HAP-1 (cell line): ENCODE measurements at regions of chr5 and their contacts with region 1.

Region 1: DNA sequence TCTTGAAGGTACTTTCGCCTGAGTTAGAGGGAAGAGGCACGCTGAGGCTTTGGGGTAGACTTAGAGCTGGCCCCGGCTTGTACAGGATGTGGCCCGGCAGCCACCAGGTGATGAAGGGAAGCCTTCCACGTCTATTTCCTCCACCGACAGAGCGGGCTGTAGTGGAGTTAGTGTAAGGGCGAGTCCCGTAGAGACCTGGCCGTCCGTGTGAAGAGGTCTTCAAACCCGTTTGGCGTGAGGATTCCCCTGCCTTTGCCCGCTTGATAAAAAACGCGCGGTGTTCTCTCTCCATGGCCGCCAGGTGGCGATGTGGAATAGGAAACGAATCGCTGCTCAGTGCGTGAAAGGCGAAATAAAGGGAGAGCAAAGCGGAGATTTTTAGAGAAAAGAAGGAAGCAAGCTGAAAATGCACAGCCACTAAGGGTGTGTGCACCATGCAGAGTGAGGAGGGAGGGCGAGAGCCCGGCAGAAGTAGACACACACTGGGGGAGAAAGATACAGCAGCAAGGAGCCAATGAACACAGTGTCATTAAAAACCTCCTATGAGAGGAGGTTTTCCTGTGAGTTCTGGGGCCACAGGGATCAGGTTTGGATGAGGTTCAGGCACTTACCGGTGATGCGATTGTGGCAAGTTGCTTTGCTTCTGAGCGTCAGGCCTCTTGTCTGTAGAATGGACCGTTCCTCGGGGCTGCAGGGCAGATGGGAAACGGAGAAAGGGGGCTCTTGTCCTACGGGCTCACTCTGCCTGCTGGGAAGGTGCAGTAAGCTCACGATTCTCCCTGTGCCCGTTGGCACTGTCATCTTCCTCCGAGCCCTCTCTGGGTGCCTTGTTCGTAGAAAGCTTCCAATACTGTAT is 34.2 kb downstream of the STC2 start:
- DNase-seq: peak; percentile 81 to 88
- H3K4me3 ChIP-seq: no peak overlapping the region
- H3K4me1 ChIP-seq: peaks cover 5% of the 10 kb centered on the region
- H3K27me3 ChIP-seq: no peaks in the 10 kb centered on the region

Region 2: DNA sequence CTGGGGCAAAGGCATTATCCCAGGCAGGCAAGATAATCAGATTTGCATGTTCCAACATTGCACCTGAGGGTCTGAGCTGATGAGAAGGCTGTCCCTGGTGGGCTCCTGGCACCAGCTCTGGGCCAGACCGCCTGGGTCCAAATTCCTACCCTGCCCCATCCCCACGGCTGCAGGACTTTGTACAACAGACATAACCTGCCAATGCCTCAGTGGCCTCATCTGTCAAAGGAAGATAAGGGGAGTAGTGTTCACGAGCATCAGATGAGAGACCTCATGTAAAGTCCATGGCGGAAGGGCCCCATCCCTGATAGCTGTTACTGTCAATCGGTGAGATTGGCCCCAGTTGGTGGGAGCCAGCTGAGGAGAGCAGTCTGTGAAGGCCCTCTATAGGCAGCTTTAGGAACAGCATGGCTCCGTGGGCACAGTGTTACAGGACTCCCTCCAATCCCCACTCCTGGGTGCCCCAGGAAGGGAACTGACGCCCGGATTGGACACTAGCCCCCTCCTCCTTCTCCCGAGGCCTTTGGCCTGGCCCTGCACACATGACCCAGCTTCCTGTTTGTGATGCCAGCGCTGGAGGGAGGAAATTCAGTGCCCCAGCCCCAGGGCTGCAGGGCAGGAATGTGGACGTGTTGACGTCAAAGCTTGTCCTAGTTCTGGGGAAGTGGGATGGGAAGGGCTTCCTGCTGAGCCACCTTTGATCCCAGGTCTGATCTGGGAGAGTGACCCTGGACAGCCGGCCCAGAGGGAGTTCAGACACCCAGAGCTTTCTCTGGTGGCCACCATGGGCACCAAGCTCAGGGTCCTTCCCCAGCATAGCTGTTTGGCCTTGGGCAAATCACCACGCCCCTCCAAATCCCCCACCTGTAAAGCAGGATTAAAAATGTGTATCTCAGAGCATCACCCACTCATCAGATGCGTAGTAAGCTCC is 579.3 kb before region 1 on chr5:
- in situ Hi-C with region 1: loop called (anchors 25 kb)
- DNase-seq: peak; percentile 57 to 86
- H3K4me3 ChIP-seq: no peak overlapping the region
- H3K4me1 ChIP-seq: no peaks in the 10 kb centered on the region
- H3K27me3 ChIP-seq: peaks cover 7% of the 10 kb centered on the region

Region 3: GRCh38 chr5:172939071-172939470 is 355.0 kb before region 1 on chr5:
- in situ Hi-C with region 1: no loop called
- DNase-seq: peak in 1 of 2 experiments; percentile 52
- H3K4me3 ChIP-seq: no peak overlapping the region
- H3K4me1 ChIP-seq: peaks cover 22% of the 10 kb centered on the region
- H3K27me3 ChIP-seq: no peaks in the 10 kb centered on the region

Region 4: DNA sequence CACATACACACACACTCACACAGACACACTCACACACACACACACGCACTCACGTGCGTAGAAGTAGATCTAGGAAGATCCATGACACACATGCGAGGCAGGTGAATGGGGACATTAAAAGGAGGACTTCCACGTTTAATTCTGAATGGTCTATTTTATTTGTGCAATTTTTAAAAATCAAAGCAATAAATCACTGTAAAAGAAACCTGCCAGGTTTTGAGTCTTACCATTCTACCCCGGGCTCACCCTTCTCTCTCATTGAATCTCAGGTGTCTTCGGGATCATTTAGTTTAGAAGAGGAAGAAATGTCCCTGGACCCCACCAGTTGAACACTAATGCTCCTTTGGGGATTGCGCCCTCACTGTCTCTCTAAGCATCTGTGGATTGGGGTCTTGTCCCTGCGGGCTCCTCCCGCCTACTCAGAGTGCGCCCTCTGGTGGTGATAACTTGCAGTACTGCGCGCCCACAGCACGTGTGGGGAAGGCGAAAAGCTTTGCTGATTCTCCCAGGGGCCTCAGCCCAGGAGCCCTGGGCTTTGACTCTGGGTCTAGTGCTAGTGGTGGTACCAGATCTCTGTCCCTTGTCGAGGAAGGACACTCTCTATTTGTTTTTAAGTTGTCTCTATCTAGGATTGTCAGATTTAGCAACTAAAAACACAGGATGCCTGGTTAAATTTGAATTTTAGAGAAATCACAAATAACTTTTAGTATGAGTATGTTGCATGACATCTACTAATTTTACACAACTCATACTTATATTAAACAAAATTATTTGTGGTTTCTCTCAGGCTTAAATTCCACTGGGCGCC is 287.6 kb after region 1 on chr5:
- in situ Hi-C with region 1: loop called (anchors 5 kb)
- DNase-seq: peak; percentile 21 to 85
- H3K4me3 ChIP-seq: no peak overlapping the region
- H3K4me1 ChIP-seq: no peaks in the 10 kb centered on the region
- H3K27me3 ChIP-seq: no peaks in the 10 kb centered on the region

Region 5: DNA sequence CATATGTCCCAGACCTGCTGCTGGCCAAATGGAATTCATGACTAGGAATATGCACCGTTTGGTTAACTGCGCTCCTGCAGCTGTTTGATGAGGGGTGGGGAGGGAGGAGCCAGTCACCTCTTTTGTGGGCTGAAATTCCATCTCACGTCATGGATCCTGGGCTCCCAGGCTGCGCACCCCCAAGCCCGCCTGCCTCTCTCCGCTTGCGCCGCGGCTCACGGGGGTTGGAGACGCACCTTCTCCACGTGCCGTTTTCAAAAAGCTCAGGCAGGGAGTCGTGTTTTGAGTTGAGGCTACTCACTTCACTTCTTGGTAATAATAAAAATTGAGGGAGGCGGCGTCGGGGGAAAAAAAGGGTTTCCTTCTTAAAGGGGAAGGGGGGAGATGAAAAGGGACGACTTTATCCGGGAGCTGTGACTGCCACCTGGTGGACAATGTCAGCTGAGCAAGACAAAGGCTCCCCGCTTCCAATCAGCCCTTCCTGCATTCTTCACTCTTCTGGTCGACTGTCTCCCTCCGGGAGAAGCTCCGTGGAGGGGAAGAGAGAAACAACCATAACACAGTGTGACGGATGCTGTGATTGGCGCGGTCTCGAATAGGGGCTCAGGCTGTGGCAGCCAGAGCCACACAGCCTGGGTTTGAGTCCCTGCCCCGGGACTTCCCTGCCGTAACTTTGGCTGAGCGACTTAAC is 679.0 kb after region 1 on chr5:
- in situ Hi-C with region 1: loop called (anchors 25 kb)
- DNase-seq: peak; percentile 72 to 87
- H3K4me3 ChIP-seq: peak overlapping the region; percentile 15
- H3K4me1 ChIP-seq: no peaks in the 10 kb centered on the region
- H3K27me3 ChIP-seq: peaks cover 2% of the 10 kb centered on the region; the same call in 1 of the 2 replicates

Region 6: DNA sequence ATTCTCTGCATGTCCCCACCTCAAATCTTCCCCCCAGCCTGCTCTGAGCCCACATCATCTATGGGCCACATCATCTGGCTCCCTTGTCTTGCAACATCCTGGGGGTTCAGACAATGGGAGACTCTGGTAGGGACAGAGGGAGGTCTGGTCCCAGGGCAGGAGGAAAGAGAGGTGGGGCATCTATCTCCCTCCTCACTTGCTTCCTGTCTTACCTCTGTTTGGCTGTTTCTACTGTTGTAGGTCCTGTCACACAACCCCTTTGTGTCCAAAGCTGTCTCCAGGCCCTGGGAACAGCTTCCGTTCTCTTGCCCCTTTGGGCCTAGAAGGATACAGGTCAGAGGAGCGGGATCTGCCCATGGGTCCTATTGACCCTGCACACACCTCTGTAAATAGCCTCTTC is 978.6 kb after region 1 on chr5:
- in situ Hi-C with region 1: no loop called
- DNase-seq: no peak
- H3K4me3 ChIP-seq: no peak overlapping the region
- H3K4me1 ChIP-seq: no peaks in the 10 kb centered on the region
- H3K27me3 ChIP-seq: 0 out of 2 replicates have a peak, but pooled peaks cover 2% of the 10 kb centered on the region